CD8-positive, alpha-beta T cell (primary cell): ENCODE measurements at regions of chr1 and their contacts with region 1.

Region 1: DNA sequence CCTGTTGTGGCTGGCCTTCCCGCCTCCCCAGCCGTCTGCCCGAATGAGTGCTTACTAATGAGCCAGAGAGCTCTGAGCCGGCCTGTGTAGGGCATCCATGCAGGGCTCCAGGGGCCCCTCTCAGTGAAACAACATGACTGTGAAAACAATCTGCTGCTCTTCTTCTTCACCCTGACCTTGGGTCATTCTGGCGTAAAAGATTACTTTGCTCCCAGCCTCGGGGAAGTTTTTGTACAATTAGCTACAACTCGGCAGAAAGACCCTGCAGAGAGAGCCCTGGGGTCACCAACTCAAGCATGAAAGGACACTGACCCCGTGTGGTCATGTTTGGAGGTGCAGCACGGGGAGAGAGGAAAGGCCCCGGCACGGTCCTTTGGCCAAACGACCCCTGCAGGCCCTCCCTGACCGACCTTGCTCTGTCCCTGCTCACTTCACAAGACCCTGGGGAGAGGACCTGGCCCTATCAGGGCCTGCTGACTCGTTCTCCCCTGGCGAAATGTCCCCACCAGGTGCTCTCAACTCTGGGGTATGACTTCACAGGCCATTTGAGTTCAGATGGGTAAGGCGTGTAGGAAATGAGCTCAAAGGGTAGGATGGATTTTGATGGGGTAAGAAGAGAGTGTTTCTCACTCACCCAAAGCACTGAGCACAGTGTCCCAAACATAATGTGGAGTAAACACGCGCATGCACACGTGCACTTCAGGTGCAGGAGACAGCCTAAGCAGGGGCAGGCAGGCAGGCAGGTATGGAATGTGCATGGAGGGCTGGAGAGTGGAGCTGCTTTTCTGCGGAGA is 22.9 kb upstream of the FAM20B start:
- DNase-seq: peak; percentile 40 to 83 (median 71)
- ATAC-seq: peak; percentile 76
- H3K4me3 ChIP-seq: no peak overlapping the region
- H3K4me3 Mint-ChIP-seq: no peak overlapping the region
- H3K27ac ChIP-seq: no peak overlapping the region
- H3K27ac Mint-ChIP-seq: no peak overlapping the region
- H3K4me1 ChIP-seq: peaks cover 24% of the 10 kb centered on the region
- H3K4me1 Mint-ChIP-seq: peaks cover 20% of the 10 kb centered on the region
- H3K27me3 ChIP-seq: no peaks in the 10 kb centered on the region
- H3K27me3 Mint-ChIP-seq: no peaks in the 10 kb centered on the region
- CTCF ChIP-seq: peak; percentile 91

Region 2: DNA sequence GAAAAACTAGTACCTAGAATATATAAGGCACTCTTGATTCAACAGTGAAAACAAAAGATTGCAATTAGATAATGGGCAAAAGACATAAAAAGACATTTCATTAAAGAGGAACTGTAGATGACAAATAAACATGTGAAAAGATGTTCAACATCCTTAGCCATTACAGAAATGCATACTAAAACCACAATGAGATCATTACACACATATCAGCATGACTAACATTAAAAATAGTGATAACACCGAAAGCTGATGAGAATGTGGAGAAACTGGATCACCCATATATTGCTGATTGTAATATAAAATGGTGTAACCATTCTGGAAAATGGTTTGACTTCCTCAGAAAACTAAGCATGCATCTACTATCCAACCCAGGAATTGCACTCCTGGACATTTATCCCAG is 1373.2 kb before region 1 on chr1:
- CTCF ChIA-PET with region 1: no interaction called
- POLR2A ChIA-PET with region 1: no interaction called
- intact Hi-C with region 1: no loop called
- DNase-seq: no peak
- ATAC-seq: no peak
- H3K4me3 ChIP-seq: no peak overlapping the region
- H3K4me3 Mint-ChIP-seq: no peak overlapping the region
- H3K27ac ChIP-seq: no peak overlapping the region
- H3K27ac Mint-ChIP-seq: no peak overlapping the region
- H3K4me1 ChIP-seq: no peaks in the 10 kb centered on the region
- H3K4me1 Mint-ChIP-seq: no peaks in the 10 kb centered on the region
- H3K27me3 ChIP-seq: no peaks in the 10 kb centered on the region
- H3K27me3 Mint-ChIP-seq: no peaks in the 10 kb centered on the region
- CTCF ChIP-seq: no peak

Region 3: DNA sequence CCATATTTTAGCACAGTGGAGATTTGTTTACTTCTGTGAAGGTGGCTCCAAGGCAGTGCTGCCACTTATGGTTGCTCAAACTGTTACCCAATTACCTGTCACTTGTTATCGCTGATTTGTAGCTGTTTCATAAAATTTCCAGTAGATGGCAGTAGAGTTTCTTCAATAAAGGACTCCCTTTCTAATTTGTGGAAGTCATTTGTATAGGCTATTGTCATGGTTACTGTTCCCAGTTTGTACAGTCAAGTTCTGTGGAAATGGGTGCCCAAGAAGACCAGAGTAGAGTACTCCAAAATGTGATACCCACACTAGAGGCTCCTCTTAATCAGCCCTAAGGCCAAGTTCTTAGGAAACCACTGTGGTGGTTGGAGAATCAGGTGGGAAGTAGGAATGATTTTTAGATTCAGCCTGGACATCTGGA is 692.1 kb before region 1 on chr1:
- CTCF ChIA-PET with region 1: no interaction called
- POLR2A ChIA-PET with region 1: no interaction called
- intact Hi-C with region 1: loop called (anchors 2 to 5 kb)
- DNase-seq: peak in 2 of 9 experiments; percentile 16 to 42
- ATAC-seq: no peak
- H3K4me3 ChIP-seq: no peak overlapping the region
- H3K4me3 Mint-ChIP-seq: no peak overlapping the region
- H3K27ac ChIP-seq: no peak overlapping the region
- H3K27ac Mint-ChIP-seq: no peak overlapping the region
- H3K4me1 ChIP-seq: no peaks in the 10 kb centered on the region
- H3K4me1 Mint-ChIP-seq: no peaks in the 10 kb centered on the region
- H3K27me3 ChIP-seq: no peaks in the 10 kb centered on the region
- H3K27me3 Mint-ChIP-seq: no peaks in the 10 kb centered on the region
- CTCF ChIP-seq: peak; percentile 54

Region 4: GRCh38 chr1:178542560-178543356 is 460.0 kb before region 1 on chr1:
- CTCF ChIA-PET with region 1: interaction called, 44 read pairs
- POLR2A ChIA-PET with region 1: interaction called, 4 read pairs
- intact Hi-C with region 1: loop called in 1 of 2 experiments (anchors 1 kb)
- DNase-seq: peak; percentile 68 to 96 (median 85)
- ATAC-seq: peak; percentile 92
- H3K4me3 ChIP-seq: peak overlapping the region; percentile 75 to 92
- H3K4me3 Mint-ChIP-seq: peak overlapping the region; percentile 90
- H3K27ac ChIP-seq: peak overlapping the region in 1 of 2 experiments; percentile 22
- H3K27ac Mint-ChIP-seq: peak overlapping the region; percentile 62
- H3K4me1 ChIP-seq: peaks cover 11% of the 10 kb centered on the region
- H3K4me1 Mint-ChIP-seq: peaks cover 9% of the 10 kb centered on the region
- H3K27me3 ChIP-seq: no peaks in the 10 kb centered on the region
- H3K27me3 Mint-ChIP-seq: no peaks in the 10 kb centered on the region
- CTCF ChIP-seq: peak; percentile 98

Region 5: DNA sequence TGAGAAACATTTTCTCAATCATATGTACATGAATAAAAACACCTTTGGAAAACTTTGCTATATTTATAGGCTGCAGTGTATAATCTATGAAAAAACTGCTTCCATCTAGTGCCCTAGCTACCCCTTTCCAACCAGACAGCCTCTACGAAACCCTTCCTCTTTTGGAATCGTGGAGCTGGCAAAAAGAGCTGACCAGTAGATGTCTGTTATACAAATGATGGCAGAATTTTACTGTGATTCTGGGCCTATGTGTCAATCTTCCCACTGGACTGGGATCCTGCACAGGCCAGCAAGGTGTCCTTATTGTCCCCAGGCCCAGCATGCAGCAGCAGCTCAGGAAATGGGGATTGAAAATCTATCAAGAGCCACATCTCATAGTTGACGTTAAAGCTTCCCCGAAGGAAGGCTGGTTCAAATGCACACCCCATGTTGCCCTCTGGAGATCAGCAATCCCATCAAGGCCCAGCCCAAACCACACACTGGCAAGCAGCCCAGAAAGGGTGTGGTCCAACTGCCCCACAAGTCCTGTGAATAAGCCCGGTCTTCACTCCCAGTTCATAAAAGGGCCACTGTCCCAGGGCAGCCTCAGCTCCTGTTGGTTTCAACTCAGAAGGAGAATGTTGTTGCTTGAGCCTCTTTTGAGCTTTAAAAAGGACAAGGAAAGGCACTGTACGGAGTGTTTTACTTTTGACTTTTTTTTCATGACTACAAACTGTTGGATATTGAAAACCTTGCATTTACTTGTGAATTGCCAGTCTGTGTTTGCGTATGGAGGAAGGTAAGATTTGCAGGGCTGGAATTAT is 14.2 kb after region 1 on chr1:
- CTCF ChIA-PET with region 1: interaction called, 16 read pairs
- POLR2A ChIA-PET with region 1: no interaction called
- intact Hi-C with region 1: no loop called
- DNase-seq: no peak
- ATAC-seq: no peak
- H3K4me3 ChIP-seq: no peak overlapping the region
- H3K4me3 Mint-ChIP-seq: no peak overlapping the region
- H3K27ac ChIP-seq: no peak overlapping the region
- H3K27ac Mint-ChIP-seq: no peak overlapping the region
- H3K4me1 ChIP-seq: no peaks in the 10 kb centered on the region
- H3K4me1 Mint-ChIP-seq: peaks cover 2% of the 10 kb centered on the region
- H3K27me3 ChIP-seq: no peaks in the 10 kb centered on the region
- H3K27me3 Mint-ChIP-seq: peaks cover 7% of the 10 kb centered on the region
- CTCF ChIP-seq: no peak

Region 6: DNA sequence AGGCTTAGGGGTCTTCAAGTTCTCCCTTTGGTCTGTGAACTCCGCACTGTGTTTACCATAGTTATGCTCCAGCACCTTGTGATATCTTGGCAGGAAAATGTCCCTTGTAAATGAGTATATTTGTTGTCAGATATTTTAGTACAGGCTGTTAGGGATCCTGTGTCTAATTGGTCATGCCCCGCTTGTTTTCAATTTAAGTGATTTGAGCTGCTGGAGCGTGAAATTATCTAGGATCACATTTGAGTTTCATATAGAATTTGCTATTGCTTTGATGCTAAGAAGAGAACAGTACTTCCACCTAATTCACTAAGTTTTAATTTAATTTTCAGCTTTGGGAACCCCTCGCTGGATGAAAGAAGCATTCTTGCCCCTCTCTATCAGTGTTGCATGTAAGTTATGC is 63.7 kb after region 1 on chr1:
- CTCF ChIA-PET with region 1: interaction called, 4 read pairs
- POLR2A ChIA-PET with region 1: no interaction called
- intact Hi-C with region 1: loop called in 1 of 2 experiments (anchors 2 kb)
- DNase-seq: no peak
- ATAC-seq: no peak
- H3K4me3 ChIP-seq: no peak overlapping the region
- H3K4me3 Mint-ChIP-seq: no peak overlapping the region
- H3K27ac ChIP-seq: no peak overlapping the region
- H3K27ac Mint-ChIP-seq: no peak overlapping the region
- H3K4me1 ChIP-seq: no peaks in the 10 kb centered on the region
- H3K4me1 Mint-ChIP-seq: no peaks in the 10 kb centered on the region
- H3K27me3 ChIP-seq: no peaks in the 10 kb centered on the region
- H3K27me3 Mint-ChIP-seq: no peaks in the 10 kb centered on the region
- CTCF ChIP-seq: no peak

Region 7: GRCh38 chr1:179169616-179170467 is 167.1 kb after region 1 on chr1:
- CTCF ChIA-PET with region 1: no interaction called
- POLR2A ChIA-PET with region 1: no interaction called
- intact Hi-C with region 1: no loop called
- DNase-seq: no peak
- ATAC-seq: no peak
- H3K4me3 ChIP-seq: no peak overlapping the region
- H3K4me3 Mint-ChIP-seq: no peak overlapping the region
- H3K27ac ChIP-seq: no peak overlapping the region
- H3K27ac Mint-ChIP-seq: no peak overlapping the region
- H3K4me1 ChIP-seq: no peaks in the 10 kb centered on the region
- H3K4me1 Mint-ChIP-seq: peaks cover 17% of the 10 kb centered on the region
- H3K27me3 ChIP-seq: no peaks in the 10 kb centered on the region
- H3K27me3 Mint-ChIP-seq: no peaks in the 10 kb centered on the region
- CTCF ChIP-seq: no peak